Heart left ventricle (tissue), 16 donors: ENCODE measurements at regions of chr7 and their contacts with region 1.

Region 1: GRCh38 chr7:131400833-131401593 is 73.3 kb downstream of the MKLN1 start:
- DNase-seq: no peak
- ATAC-seq: peak; percentile 34 to 61 (median 54)
- H3K4me3 ChIP-seq: no peak overlapping the region
- H3K27ac ChIP-seq: peak overlapping the region; percentile 1 to 62 (median 36)
- H3K4me1 ChIP-seq: peaks cover 0 to 28% (median 16%) of the 10 kb centered on the region in 12 donors
- H3K27me3 ChIP-seq: no peaks in the 10 kb centered on the region
- CTCF ChIP-seq: no peak
- POLR2A ChIP-seq: no peak

Region 2: DNA sequence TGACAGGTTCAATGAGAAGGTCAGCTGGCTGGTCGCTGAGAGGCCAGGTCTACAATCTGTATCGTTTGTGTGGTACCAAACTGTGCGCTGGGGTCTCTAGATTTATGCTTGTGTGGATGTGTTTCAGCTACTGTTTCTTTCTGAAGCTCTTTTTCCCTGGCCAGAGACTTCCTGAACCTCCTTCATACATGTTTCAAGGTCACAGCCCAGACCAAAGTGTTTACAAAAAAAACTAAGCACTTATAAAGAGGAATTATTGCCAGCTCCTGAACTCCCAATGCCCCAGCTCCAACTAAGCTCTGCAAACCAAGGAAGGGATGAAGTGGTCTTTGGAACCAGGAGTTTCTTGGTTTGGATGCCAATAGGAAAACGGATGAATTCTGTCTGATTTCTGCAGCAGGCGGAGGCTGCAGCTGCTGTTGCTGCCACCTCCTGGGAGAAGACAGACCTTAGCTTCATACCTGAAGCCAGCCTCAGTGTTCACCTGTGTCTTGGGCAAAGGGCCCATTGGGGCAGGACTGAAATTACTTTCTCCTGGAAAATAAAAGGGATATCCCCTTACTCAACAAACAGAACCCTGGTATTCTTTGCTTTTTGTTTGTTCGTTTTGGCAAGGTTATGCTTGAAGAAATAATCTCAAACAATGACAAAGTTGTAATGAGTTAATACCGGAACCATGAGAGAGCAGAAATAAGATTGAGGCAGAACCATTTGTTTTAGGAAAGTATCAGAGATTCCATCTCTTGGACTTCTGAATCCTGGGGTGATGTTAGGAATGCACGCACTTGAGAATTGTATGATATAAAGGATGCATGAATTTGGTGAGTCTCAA is 97.9 kb before region 1 on chr7:
- intact Hi-C with region 1: no loop called
- DNase-seq: no peak
- ATAC-seq: peak in 3 of 4 donors; percentile 39 to 58 (median 46)
- H3K4me3 ChIP-seq: no peak overlapping the region
- H3K27ac ChIP-seq: peak overlapping the region in 8 of 12 donors; percentile 4 to 72 (median 55)
- H3K4me1 ChIP-seq: peaks cover 0 to 41% (median 22%) of the 10 kb centered on the region in 12 donors
- H3K27me3 ChIP-seq: no peaks in the 10 kb centered on the region
- CTCF ChIP-seq: peak; percentile 34 to 70 (median 56)
- POLR2A ChIP-seq: no peak

Region 3: DNA sequence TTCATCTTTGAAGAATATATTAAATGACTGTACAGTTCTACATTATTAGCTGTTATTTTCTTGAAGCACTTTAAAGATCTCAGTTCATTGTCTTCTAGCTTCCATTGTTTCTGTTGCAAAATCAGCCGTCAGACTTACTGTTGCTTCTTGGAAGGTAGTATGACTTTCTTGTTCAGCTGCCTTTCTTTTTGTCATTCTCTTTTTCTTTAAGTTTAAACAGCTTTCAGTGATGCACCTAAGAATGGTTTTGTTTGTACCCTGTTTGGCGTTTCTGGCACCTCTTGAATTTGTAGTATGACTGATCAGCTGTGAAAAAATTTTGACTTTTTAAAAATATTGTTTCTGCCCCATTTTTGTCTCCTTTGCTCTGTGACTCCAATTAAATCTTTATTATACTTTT is 64.1 kb before region 1 on chr7:
- intact Hi-C with region 1: loop called in 1 of 10 experiments (anchors 10 kb)
- DNase-seq: no peak
- ATAC-seq: no peak
- H3K4me3 ChIP-seq: no peak overlapping the region
- H3K27ac ChIP-seq: no peak overlapping the region
- H3K4me1 ChIP-seq: peaks cover 0 to 45% (median 8%) of the 10 kb centered on the region in 12 donors
- H3K27me3 ChIP-seq: no peaks in the 10 kb centered on the region
- CTCF ChIP-seq: no peak
- POLR2A ChIP-seq: no peak